GM12878 (cell line): ENCODE measurements at regions of chr1 and their contacts with region 1.

Region 1: GRCh38 chr1:67760030-67760821 is 73.0 kb downstream of the GNG12 start:
- DNase-seq: peak; percentile 90
- ATAC-seq: peak; percentile 98
- H3K4me3 ChIP-seq: no peak overlapping the region
- H3K27ac ChIP-seq: peak overlapping the region; percentile 84
- H3K4me1 ChIP-seq: peaks cover 15% of the 10 kb centered on the region
- H3K27me3 ChIP-seq: peaks cover 0 to 3% of the 10 kb centered on the region in 2 experiments; a peak in 2 of 4 replicates
- CTCF ChIP-seq: peak; percentile 70 to 84 (median 81); a peak in 5 of 6 replicates
- EP300 ChIP-seq: peak; percentile 96 to 99; a peak in 3 of 4 replicates
- POLR2A ChIP-seq: no peak
- RAD21 ChIP-seq: peak; percentile 85

Region 2: GRCh38 chr1:67430352-67431155 is 329.7 kb before region 1 on chr1 and contains the start of gene SERBP1:
- CTCF ChIA-PET with region 1: no interaction called
- POLR2A ChIA-PET with region 1: no interaction called
- RAD21 ChIA-PET with region 1: interaction called, 3 read pairs
- SMC1A ChIA-PET with region 1: interaction called, 6 read pairs
- in situ Hi-C with region 1: no loop called
- intact Hi-C with region 1: loop called (anchors 5 kb)
- DNase-seq: peak; percentile 98
- ATAC-seq: peak; percentile 86
- H3K4me3 ChIP-seq: peak within 1 kb of the TSS; percentile 91
- H3K27ac ChIP-seq: peak within 1 kb of the TSS; percentile 96
- H3K4me1 ChIP-seq: peaks cover 15% of the 10 kb centered on the region
- H3K27me3 ChIP-seq: no peaks in the 10 kb centered on the region
- CTCF ChIP-seq: no peak
- EP300 ChIP-seq: peak in 1 of 2 experiments; percentile 50; a peak in 2 of 4 replicates
- POLR2A ChIP-seq: peak; percentile 59
- RAD21 ChIP-seq: no peak
- polyA plus RNA-seq, gene SERBP1: 76.7 to 111 TPM

Region 3: GRCh38 chr1:67570473-67571143 is 189.6 kb before region 1 on chr1:
- CTCF ChIA-PET with region 1: interaction called, 13 read pairs
- POLR2A ChIA-PET with region 1: no interaction called
- RAD21 ChIA-PET with region 1: interaction called, 14 read pairs
- SMC1A ChIA-PET with region 1: interaction called, 5 read pairs
- in situ Hi-C with region 1: no loop called
- intact Hi-C with region 1: no loop called
- DNase-seq: no peak
- ATAC-seq: no peak
- H3K4me3 ChIP-seq: no peak overlapping the region
- H3K27ac ChIP-seq: no peak overlapping the region
- H3K4me1 ChIP-seq: no peaks in the 10 kb centered on the region
- H3K27me3 ChIP-seq: 0 out of 4 replicates have a peak, but pooled peaks cover 0 to 2% of the 10 kb centered on the region in 2 experiments
- CTCF ChIP-seq: no peak
- EP300 ChIP-seq: no peak
- POLR2A ChIP-seq: no peak
- RAD21 ChIP-seq: no peak

Region 4: DNA sequence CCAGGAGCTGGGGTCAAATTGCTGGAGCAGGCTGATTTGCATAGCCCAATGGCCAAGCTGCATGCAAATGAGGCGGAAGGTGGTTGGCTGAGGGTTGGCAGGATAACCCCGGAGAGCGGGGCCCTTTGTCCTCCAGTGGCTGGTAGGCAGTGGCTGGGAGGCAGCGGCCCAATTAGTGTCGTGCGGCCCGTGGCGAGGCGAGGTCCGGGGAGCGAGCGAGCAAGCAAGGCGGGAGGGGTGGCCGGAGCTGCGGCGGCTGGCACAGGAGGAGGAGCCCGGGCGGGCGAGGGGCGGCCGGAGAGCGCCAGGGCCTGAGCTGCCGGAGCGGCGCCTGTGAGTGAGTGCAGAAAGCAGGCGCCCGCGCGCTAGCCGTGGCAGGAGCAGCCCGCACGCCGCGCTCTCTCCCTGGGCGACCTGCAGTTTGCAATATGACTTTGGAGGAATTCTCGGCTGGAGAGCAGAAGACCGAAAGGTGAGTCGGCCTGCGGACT is 75.1 kb before region 1 on chr1 and contains the start of gene GADD45A:
- CTCF ChIA-PET with region 1: interaction called, 107 read pairs
- POLR2A ChIA-PET with region 1: interaction called, 33 read pairs
- RAD21 ChIA-PET with region 1: interaction called, 225 read pairs
- SMC1A ChIA-PET with region 1: interaction called, 197 read pairs
- in situ Hi-C with region 1: loop called (anchors 5 kb)
- intact Hi-C with region 1: loop called (anchors 1 kb)
- DNase-seq: peak; percentile 97
- ATAC-seq: peak; percentile 88
- H3K4me3 ChIP-seq: peak within 1 kb of the TSS; percentile 81
- H3K27ac ChIP-seq: peak within 1 kb of the TSS; percentile 83
- H3K4me1 ChIP-seq: peaks cover 8% of the 10 kb centered on the region
- H3K27me3 ChIP-seq: peaks cover 0 to 2% of the 10 kb centered on the region in 2 experiments; a peak in 2 of 4 replicates
- CTCF ChIP-seq: no peak
- EP300 ChIP-seq: 0 out of 4 replicates have a peak, but pooled peaks of 1 of the 2 experiments have one; percentile 36
- POLR2A ChIP-seq: peak; percentile 100
- RAD21 ChIP-seq: no peak
- polyA plus RNA-seq, gene GADD45A: 4.7 to 9.3 TPM

Region 5: GRCh38 chr1:67723620-67724019 is 36.6 kb before region 1 on chr1:
- CTCF ChIA-PET with region 1: interaction called, 40 read pairs
- POLR2A ChIA-PET with region 1: no interaction called
- RAD21 ChIA-PET with region 1: interaction called, 12 read pairs
- SMC1A ChIA-PET with region 1: interaction called, 227 read pairs
- in situ Hi-C with region 1: no loop called
- intact Hi-C with region 1: no loop called
- DNase-seq: no peak
- ATAC-seq: peak; percentile 91
- H3K4me3 ChIP-seq: no peak overlapping the region
- H3K27ac ChIP-seq: no peak overlapping the region
- H3K4me1 ChIP-seq: peaks cover 3% of the 10 kb centered on the region; the same call in 1 of the 2 replicates
- H3K27me3 ChIP-seq: no peaks in the 10 kb centered on the region
- CTCF ChIP-seq: no peak
- EP300 ChIP-seq: no peak
- POLR2A ChIP-seq: no peak
- RAD21 ChIP-seq: no peak

Region 6: DNA sequence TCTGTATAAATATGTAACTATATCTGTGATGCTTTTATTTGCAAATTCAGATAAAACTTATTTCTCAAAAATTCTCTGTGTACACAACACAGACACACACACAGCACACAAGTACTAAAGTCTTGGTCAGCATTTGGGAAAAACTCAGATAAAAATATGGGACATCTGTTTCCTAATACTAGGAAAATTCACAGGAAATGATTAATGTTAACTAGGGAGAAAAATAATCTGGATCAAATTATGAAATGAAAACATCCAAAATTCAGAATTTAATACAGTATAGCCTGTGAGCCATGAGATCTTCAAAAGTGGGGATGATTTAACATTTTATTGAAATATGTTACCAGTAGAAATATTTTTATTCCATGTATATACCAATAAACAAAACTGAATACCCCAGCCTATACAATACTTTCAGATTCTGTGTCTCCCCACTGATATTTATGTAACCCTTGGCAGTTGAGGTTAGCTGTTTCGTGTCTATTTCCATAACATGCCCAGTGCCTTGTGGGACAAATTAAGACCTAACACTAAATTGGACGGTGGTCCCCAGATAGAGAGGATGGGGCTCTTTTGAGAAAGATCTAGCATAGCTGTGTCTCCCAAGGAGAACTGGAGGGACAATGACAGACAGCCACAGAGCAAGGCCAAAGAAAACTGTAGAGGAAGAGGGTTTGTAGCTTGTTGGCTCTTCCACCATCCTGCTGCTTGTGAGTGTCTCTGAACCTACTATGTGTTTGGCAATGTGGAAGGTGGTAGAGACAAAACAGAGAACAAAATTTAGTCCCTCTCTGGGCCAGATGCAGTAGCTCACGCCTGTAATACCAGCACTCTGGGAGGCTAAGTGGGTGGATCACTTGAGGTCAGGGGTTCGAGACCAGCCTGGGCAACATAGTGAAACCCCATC is 25.9 kb after region 1 on chr1:
- CTCF ChIA-PET with region 1: interaction called, 15 read pairs
- POLR2A ChIA-PET with region 1: interaction called, 6 read pairs
- RAD21 ChIA-PET with region 1: interaction called, 73 read pairs
- SMC1A ChIA-PET with region 1: interaction called, 232 read pairs
- in situ Hi-C with region 1: no loop called
- intact Hi-C with region 1: no loop called
- DNase-seq: no peak
- ATAC-seq: peak; percentile 14; the same call in 2 of the 3 replicates
- H3K4me3 ChIP-seq: no peak overlapping the region
- H3K27ac ChIP-seq: no peak overlapping the region
- H3K4me1 ChIP-seq: no peaks in the 10 kb centered on the region
- H3K27me3 ChIP-seq: no peaks in the 10 kb centered on the region
- CTCF ChIP-seq: no peak
- EP300 ChIP-seq: no peak
- POLR2A ChIP-seq: no peak
- RAD21 ChIP-seq: no peak

Region 7: DNA sequence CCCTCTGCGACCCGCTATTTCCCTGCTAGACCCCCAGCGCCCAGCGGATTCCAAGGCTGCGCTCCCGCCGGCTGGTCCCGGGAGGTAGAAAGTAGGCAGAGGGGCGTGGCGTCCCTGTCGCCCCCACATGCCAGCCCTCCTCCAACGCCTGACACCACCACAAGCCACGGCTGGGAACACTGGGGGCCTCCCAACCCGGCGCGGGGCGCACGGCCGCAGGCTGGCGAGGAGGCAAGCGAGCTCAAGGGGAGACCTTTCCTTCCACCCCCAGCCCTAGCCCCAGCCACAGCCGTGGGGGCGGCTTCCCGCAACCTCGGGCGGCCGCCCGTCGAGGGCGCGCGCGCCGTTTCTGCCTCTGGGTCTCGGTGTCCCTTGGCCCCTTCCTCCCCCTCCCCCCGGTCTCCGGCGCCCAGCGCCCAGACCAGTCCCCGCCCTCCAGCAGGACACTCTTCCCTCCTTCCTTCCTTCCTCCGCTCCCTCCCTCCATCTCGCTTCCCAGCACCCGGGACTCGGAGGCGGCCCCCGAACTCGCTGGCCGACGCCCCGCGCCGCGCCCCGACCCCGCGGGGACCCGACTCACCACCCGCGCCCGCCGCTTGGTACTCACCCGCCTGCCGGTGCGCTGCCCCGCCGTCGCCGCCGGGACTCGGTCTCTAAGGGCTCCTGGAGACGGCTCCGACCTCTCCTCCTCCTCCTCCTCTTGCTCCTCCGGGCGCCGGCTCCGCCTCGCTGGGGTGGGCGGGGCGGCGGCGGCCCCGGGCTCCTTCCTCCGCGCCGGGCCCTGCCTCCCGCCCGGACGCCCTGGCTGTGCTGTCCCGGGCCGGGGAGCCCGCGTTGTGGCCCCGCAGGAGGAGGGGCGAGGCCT is 72.7 kb after region 1 on chr1 and contains the start of gene GNG12:
- CTCF ChIA-PET with region 1: interaction called, 298 read pairs
- POLR2A ChIA-PET with region 1: interaction called, 3 read pairs
- RAD21 ChIA-PET with region 1: interaction called, 320 read pairs
- SMC1A ChIA-PET with region 1: interaction called, 1,058 read pairs
- in situ Hi-C with region 1: no loop called
- intact Hi-C with region 1: no loop called
- DNase-seq: no peak
- ATAC-seq: peak; percentile 78
- H3K4me3 ChIP-seq: no peak within 1 kb of the TSS
- H3K27ac ChIP-seq: no peak within 1 kb of the TSS
- H3K4me1 ChIP-seq: no peaks in the 10 kb centered on the region
- H3K27me3 ChIP-seq: peaks cover 6 to 11% of the 10 kb centered on the region in 2 experiments; a peak in 3 of 4 replicates
- CTCF ChIP-seq: no peak
- EP300 ChIP-seq: no peak
- POLR2A ChIP-seq: no peak
- RAD21 ChIP-seq: no peak
- polyA plus RNA-seq, gene GNG12: 0.22 to 0.27 TPM